Gastrocnemius medialis (tissue), 4 donors: ENCODE measurements at regions of chr19 and their contacts with region 1.

Region 1: DNA sequence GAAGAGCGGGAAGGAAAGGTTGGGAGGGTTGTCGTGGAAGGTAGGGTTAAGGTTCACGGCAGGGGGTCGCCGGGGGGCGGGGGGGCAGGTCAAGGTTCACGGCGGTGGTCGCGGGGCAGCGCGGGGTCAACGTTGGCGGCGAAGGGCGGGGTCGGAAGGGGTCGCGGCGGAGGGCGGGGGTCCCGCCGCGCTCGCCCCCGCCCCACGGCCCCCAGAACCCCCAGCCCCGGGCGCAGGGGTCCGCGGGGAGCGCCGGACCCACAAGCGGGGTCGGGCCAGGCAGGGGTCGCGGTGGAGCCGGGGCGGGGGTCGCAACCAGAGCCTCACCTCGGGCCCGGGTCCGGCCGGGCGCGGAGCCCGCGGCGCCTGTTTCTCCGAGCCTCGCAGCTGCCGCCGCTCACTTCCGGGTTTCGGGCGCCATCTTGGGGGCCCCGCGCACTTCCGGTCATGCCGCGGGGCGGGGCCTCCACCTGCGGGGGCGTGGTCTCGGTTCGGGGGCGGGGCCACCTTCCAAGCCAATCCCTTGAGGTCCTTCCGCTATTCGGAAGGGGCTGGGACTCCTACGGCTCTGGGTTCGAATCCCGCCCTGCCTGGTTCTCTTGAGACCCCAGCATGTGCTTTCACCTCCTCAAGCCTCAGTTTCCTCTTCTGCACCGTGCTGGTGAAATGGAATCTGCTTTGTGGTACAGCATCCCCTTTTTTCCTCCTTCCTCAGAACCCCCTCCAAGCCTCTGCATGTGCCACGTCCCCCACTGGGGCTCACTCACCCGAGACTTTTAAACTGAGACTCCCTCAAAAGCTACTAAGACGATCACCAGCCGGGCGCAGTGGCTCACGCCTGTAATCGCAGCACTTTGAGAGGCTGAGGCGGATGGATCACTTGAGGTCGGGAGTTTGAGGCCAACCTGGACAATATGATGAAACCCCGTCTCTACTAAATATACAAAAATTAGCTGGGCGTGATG is at the start of gene SBNO2:
- DNase-seq: peak; percentile 72 to 80
- ATAC-seq: peak; percentile 74 to 76
- H3K4me3 ChIP-seq: peak within 1 kb of the TSS; percentile 67 to 92 (median 73)
- H3K27ac ChIP-seq: peak within 1 kb of the TSS; percentile 86 to 87 (median 87)
- H3K4me1 ChIP-seq: peaks cover 12 to 21% of the 10 kb centered on the region in 2 donors
- H3K27me3 ChIP-seq: peaks cover 0 to 12% (median 0%) of the 10 kb centered on the region in 3 donors
- CTCF ChIP-seq: no peak
- POLR2A ChIP-seq: peak; percentile 83
- total RNA-seq, gene SBNO2: 22.2 to 49.8 (median 30.9) TPM

Region 2: DNA sequence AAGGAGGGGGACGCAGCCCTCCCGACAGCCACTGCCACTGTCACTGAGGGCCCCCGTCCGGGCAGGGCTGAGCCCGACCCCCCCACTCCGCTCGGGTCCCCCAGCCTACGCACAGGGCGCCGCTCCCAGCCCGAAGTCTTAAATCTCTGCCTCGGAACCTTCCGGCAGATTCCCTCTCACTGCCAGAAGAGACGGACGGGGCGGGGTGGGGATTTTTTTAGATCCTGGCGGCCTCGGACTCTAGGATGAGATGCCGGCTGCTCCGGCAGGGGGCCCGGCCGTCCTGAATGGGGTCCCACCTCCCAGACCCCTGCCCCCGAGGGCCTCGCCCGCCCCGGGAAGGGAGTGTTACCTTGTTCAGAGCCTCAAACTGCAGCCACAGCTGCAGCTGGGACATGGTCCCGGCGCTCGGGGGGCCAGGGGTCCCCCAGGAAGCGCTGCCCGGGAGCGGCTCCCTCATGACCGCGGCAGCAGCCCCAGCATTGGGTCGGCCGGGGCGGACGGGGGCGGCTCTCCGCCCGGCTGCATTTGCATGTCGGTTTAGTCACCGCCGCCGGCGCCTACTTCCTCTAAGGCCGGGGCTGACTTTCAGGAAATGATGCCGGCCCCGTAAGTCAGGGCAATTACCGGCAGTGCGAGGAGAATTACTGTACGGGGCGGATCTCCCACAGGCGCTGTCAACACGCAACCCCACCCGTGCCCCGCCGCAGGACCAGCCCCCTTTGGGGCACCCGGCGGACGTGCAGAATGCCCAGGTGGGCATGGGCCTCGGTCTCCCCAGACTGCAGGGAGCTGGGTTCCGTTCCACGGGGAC is 42.2 kb before region 1 on chr19:
- in situ Hi-C with region 1: no loop called
- intact Hi-C with region 1: loop called (anchors 2 kb)
- DNase-seq: peak; percentile 53 to 58
- ATAC-seq: peak; percentile 65 to 66
- H3K4me3 ChIP-seq: peak overlapping the region; percentile 56 to 69 (median 61)
- H3K27ac ChIP-seq: peak overlapping the region; percentile 56 to 81 (median 76)
- H3K4me1 ChIP-seq: peaks cover 21 to 32% of the 10 kb centered on the region in 2 donors
- H3K27me3 ChIP-seq: no peaks in the 10 kb centered on the region
- CTCF ChIP-seq: peak in 1 of 5 experiments; percentile 4
- POLR2A ChIP-seq: peak; percentile 37 to 46

Region 3: GRCh38 chr19:1154731-1155351 is 19.3 kb before region 1 on chr19:
- in situ Hi-C with region 1: no loop called
- intact Hi-C with region 1: loop called (anchors 2 kb)
- DNase-seq: peak; percentile 89 to 94
- ATAC-seq: peak; percentile 82 to 90
- H3K4me3 ChIP-seq: peak overlapping the region; percentile 22 to 50 (median 38)
- H3K27ac ChIP-seq: peak overlapping the region; percentile 86 to 96 (median 92)
- H3K4me1 ChIP-seq: peaks cover 48 to 52% of the 10 kb centered on the region in 2 donors
- H3K27me3 ChIP-seq: no peaks in the 10 kb centered on the region
- CTCF ChIP-seq: no peak
- POLR2A ChIP-seq: peak; percentile 81 to 84

Region 4: GRCh38 chr19:1205114-1206062 is 31.3 kb after region 1 on chr19 and contains the start of gene STK11:
- in situ Hi-C with region 1: no loop called
- intact Hi-C with region 1: no loop called
- DNase-seq: peak; percentile 98 to 99
- ATAC-seq: peak; percentile 76 to 82
- H3K4me3 ChIP-seq: peak within 1 kb of the TSS; percentile 83 to 94 (median 86)
- H3K27ac ChIP-seq: peak within 1 kb of the TSS; percentile 94 to 98 (median 96)
- H3K4me1 ChIP-seq: peaks cover 31 to 33% of the 10 kb centered on the region in 2 donors
- H3K27me3 ChIP-seq: no peaks in the 10 kb centered on the region
- CTCF ChIP-seq: no peak
- POLR2A ChIP-seq: peak; percentile 91 to 95
- total RNA-seq, gene STK11: 91.5 to 194 (median 149) TPM

Region 5: DNA sequence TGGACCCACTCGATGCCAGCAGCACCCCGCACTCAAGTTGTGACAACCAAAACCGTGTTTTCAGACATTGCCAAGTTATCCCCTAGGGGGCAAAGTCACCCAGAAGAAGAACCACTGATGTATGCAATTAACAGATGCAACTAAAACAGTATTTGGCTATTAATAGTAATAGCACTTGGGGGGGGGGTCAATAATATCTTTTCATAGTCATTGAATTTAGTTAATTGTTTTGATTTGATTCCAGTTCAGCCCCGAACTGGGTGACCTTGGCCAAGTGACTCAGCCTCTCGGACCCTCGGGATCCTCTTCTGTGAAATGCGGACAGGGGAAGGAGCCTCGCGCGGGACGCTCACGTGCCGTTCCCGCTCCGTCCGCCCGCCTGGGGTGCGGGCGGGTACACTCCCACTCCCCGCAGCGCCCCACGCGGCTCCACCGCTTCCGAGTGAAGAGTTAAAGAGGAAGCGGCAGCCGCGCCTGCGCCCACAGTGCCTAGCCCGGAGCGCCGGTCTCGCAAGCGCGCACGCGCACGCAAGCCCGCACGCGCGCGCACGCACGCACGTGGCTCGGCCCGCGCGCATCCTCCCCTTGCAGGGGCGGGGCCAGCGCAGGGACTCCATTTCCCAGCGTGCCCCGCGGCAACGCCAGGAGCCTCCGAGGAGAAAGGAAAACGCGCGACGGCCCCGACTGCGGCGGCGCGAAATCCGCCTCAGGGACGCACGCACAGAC is 232.8 kb after region 1 on chr19:
- in situ Hi-C with region 1: no loop called
- intact Hi-C with region 1: no loop called
- DNase-seq: peak; percentile 97 to 99
- ATAC-seq: peak; percentile 76 to 84
- H3K4me3 ChIP-seq: peak overlapping the region; percentile 59 to 75 (median 70)
- H3K27ac ChIP-seq: peak overlapping the region; percentile 90 to 95 (median 92)
- H3K4me1 ChIP-seq: peaks cover 32 to 33% of the 10 kb centered on the region in 2 donors
- H3K27me3 ChIP-seq: no peaks in the 10 kb centered on the region
- CTCF ChIP-seq: peak in 4 of 5 experiments; percentile 24 to 46 (median 34)
- POLR2A ChIP-seq: peak in 1 of 2 donors; percentile 24